ENCODE measurements at regions of chr2 and their contacts with region 1.

Region 1: GRCh38 chr2:130873700-130874346 is 37.1 kb downstream of the ARHGEF4 start:
- DNase-seq: peak; percentile 84
- ATAC-seq: peak; percentile 88
- H3K4me3 Mint-ChIP-seq: no peak overlapping the region
- H3K27ac Mint-ChIP-seq: no peak overlapping the region
- H3K4me1 Mint-ChIP-seq: peaks cover 4% of the 10 kb centered on the region
- H3K27me3 Mint-ChIP-seq: peaks cover 15% of the 10 kb centered on the region

Region 2: GRCh38 chr2:130824492-130825061 is 49.2 kb before region 1 on chr2:
- CTCF ChIA-PET with region 1: interaction called, 7 read pairs
- POLR2A ChIA-PET with region 1: no interaction called
- intact Hi-C with region 1: loop called in 1 of 2 experiments (anchors 1 kb)
- DNase-seq: peak; percentile 80
- ATAC-seq: peak; percentile 95
- H3K4me3 Mint-ChIP-seq: peak overlapping the region; percentile 35
- H3K27ac Mint-ChIP-seq: peak overlapping the region; percentile 89
- H3K4me1 Mint-ChIP-seq: peaks cover 20% of the 10 kb centered on the region
- H3K27me3 Mint-ChIP-seq: no peaks in the 10 kb centered on the region

Region 3: GRCh38 chr2:130850788-130851623 is 22.8 kb before region 1 on chr2:
- CTCF ChIA-PET with region 1: interaction called, 15 read pairs
- POLR2A ChIA-PET with region 1: no interaction called
- intact Hi-C with region 1: no loop called
- DNase-seq: no peak
- ATAC-seq: no peak
- H3K4me3 Mint-ChIP-seq: no peak overlapping the region
- H3K27ac Mint-ChIP-seq: no peak overlapping the region
- H3K4me1 Mint-ChIP-seq: no peaks in the 10 kb centered on the region
- H3K27me3 Mint-ChIP-seq: no peaks in the 10 kb centered on the region

Region 4: DNA sequence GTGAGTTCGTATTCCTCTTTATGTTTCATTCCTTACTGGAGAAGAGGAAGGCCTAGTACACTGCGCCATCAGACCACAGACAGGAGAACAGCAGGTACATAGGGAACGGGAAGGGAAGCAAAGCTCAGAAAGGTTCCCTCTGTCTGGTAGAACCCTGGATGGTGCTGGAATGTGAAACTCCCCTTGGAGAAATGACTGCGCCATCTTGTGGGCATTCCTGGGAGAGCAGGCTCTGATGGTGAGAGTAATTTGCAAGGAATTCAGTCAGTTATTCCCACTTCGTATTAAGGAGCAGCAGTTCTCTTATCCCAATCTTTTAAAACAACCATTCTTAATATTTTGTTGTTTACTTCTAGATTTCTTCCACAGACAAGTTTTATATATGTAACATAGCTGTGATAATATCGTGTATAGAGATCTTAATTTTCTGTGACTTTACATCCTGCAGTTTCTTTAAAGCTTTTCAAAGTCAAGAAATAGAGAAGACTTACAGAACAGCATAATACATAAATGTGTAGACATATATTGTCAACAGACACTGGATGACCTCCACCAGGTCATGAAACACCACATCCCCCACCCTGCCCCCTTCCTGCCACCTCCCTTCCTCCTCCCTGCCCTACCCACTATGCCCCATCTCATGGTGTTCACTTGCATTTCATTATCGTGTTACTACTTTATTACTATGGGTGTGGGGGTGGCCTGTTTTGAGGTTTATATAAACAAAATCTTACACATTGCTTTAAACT is 46.8 kb after region 1 on chr2:
- CTCF ChIA-PET with region 1: interaction called, 3 read pairs
- POLR2A ChIA-PET with region 1: no interaction called
- intact Hi-C with region 1: loop called in 1 of 2 experiments (anchors 1 kb)
- DNase-seq: peak; percentile 71
- ATAC-seq: no peak
- H3K4me3 Mint-ChIP-seq: no peak overlapping the region
- H3K27ac Mint-ChIP-seq: no peak overlapping the region
- H3K4me1 Mint-ChIP-seq: no peaks in the 10 kb centered on the region
- H3K27me3 Mint-ChIP-seq: peaks cover 5% of the 10 kb centered on the region

Measured in activated CD4-positive, alpha-beta T cell treated with anti-CD3 and anti-CD28 coated beads for 36 hours (primary cell).